Activated naive CD4-positive, alpha-beta T cell treated with anti-CD3 and anti-CD28 coated beads for 36 hours (primary cell): ENCODE measurements at regions of chr6 and their contacts with region 1.

Region 1: GRCh38 chr6:142692942-142693341 is 252.0 kb downstream of the HIVEP2 start:
- DNase-seq: peak; percentile 81
- H3K4me3 Mint-ChIP-seq: no peak overlapping the region
- H3K27ac Mint-ChIP-seq: peak overlapping the region; percentile 63
- H3K4me1 Mint-ChIP-seq: peaks cover 22% of the 10 kb centered on the region
- H3K27me3 Mint-ChIP-seq: no peaks in the 10 kb centered on the region

Region 2: GRCh38 chr6:142474531-142475289 is 218.2 kb before region 1 on chr6:
- CTCF ChIA-PET with region 1: interaction called, 23 read pairs
- intact Hi-C with region 1: loop called (anchors 2 kb)
- DNase-seq: peak; percentile 10
- H3K4me3 Mint-ChIP-seq: no peak overlapping the region
- H3K27ac Mint-ChIP-seq: no peak overlapping the region
- H3K4me1 Mint-ChIP-seq: peaks cover 11% of the 10 kb centered on the region
- H3K27me3 Mint-ChIP-seq: no peaks in the 10 kb centered on the region

Region 3: DNA sequence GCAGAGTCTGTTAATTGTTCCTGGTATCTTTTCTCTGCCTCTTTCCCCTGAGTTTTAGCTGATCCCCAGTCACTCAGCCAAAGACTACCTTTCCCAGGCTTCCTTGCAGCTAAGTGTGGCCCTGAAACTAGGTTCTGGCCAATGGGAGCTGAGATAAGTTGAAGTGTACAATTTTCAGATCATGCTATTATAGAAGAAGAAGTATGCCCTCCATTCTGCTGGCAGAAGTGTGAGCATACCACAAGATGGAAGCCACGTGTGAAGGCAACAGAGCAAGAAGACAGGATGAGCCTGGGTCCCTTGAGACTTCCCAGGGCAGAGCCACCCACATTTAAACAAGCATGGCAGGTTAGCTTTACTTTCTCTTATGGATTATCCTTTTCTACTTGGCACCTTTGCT is 21.2 kb before region 1 on chr6:
- CTCF ChIA-PET with region 1: no interaction called
- intact Hi-C with region 1: no loop called
- DNase-seq: no peak
- H3K4me3 Mint-ChIP-seq: no peak overlapping the region
- H3K27ac Mint-ChIP-seq: no peak overlapping the region
- H3K4me1 Mint-ChIP-seq: peaks cover 14% of the 10 kb centered on the region
- H3K27me3 Mint-ChIP-seq: no peaks in the 10 kb centered on the region

Region 4: GRCh38 chr6:142746524-142746923 is 53.6 kb after region 1 on chr6:
- CTCF ChIA-PET with region 1: interaction called, 11 read pairs
- intact Hi-C with region 1: no loop called
- DNase-seq: peak; percentile 31
- H3K4me3 Mint-ChIP-seq: no peak overlapping the region
- H3K27ac Mint-ChIP-seq: no peak overlapping the region
- H3K4me1 Mint-ChIP-seq: peaks cover 12% of the 10 kb centered on the region
- H3K27me3 Mint-ChIP-seq: no peaks in the 10 kb centered on the region

Region 5: DNA sequence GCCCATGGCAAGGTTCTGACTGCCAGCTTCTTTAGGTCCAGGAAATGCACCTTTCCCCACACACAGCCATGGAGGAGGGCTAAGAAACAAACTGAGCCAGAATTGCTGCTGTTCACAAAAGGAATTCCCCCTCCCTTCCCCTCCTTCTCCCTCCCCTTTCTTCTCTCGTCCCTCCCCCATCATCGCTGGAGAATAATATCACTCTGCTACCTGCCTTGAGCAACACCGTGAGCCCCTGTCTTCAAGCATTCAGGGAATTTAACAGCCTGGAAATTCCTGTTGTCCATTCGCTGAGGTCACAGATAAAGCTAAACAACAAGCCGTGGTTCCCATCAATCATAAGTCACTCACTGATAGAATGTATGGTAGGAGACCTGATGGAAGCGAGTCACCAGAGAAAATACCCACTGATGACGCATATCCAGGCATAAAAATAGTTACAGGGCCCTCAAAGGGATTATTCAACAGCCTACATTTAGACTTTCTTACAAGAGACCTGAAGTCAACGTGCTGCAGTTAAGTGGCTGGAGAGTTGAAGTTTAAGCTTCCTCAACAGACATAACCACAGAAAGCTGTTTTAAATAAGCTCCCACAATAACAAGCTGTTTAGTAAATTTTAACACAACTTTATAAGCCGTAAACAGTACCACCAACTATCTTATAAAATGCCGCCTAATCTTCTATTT is 192.4 kb after region 1 on chr6:
- CTCF ChIA-PET with region 1: interaction called, 6 read pairs
- intact Hi-C with region 1: loop called (anchors 1 kb)
- DNase-seq: peak; percentile 66
- H3K4me3 Mint-ChIP-seq: peak overlapping the region; percentile 90
- H3K27ac Mint-ChIP-seq: peak overlapping the region; percentile 99
- H3K4me1 Mint-ChIP-seq: peaks cover 87% of the 10 kb centered on the region
- H3K27me3 Mint-ChIP-seq: no peaks in the 10 kb centered on the region

Region 6: GRCh38 chr6:143026696-143027449 is 333.9 kb after region 1 on chr6:
- CTCF ChIA-PET with region 1: interaction called, 73 read pairs
- intact Hi-C with region 1: loop called (anchors 1 kb)
- DNase-seq: peak; percentile 76
- H3K4me3 Mint-ChIP-seq: no peak overlapping the region
- H3K27ac Mint-ChIP-seq: no peak overlapping the region
- H3K4me1 Mint-ChIP-seq: peaks cover 7% of the 10 kb centered on the region
- H3K27me3 Mint-ChIP-seq: no peaks in the 10 kb centered on the region

Region 7: GRCh38 chr6:143325379-143326140 is 632.6 kb after region 1 on chr6:
- CTCF ChIA-PET with region 1: no interaction called
- intact Hi-C with region 1: no loop called
- DNase-seq: no peak
- H3K4me3 Mint-ChIP-seq: no peak overlapping the region
- H3K27ac Mint-ChIP-seq: no peak overlapping the region
- H3K4me1 Mint-ChIP-seq: no peaks in the 10 kb centered on the region
- H3K27me3 Mint-ChIP-seq: no peaks in the 10 kb centered on the region

Region 8: DNA sequence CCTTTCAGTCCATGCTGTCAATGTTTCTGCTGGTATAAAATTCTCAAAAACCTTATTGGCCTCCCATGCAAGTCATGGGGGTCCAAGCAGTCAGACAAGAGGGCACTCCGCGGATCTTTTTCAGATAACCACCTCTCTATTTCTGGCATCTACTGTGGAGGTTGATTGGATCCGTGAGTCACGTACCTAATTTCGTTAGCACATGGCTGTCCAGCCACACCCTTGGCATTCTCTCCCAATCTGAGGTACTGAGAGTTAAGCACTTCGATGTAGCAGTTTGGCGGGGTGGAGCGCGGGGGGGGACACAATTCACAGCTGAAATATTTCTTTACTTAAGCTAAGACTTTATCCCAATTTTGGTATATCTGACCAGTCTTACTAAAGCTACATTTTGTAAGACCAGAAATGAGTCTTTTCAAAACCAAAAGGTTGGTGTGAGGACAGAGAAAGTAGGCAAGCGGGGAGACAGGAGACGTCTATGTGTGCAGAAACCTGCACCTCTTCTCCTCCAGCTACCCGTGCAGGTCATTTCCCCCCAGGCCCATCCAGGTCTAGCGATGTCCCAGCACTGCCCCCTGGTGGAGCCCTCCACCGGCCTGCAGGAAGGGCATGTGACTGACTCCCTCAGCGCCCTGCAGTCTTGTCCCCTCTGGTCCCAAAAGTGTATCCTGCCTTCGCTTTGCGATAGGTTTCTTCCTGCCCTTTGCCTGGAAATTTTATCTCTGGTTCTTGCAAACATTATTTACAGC is 644.4 kb after region 1 on chr6:
- CTCF ChIA-PET with region 1: interaction called, 7 read pairs
- intact Hi-C with region 1: loop called (anchors 5 kb)
- DNase-seq: peak; percentile 55
- H3K4me3 Mint-ChIP-seq: no peak overlapping the region
- H3K27ac Mint-ChIP-seq: no peak overlapping the region
- H3K4me1 Mint-ChIP-seq: peaks cover 4% of the 10 kb centered on the region
- H3K27me3 Mint-ChIP-seq: no peaks in the 10 kb centered on the region

Region 9: DNA sequence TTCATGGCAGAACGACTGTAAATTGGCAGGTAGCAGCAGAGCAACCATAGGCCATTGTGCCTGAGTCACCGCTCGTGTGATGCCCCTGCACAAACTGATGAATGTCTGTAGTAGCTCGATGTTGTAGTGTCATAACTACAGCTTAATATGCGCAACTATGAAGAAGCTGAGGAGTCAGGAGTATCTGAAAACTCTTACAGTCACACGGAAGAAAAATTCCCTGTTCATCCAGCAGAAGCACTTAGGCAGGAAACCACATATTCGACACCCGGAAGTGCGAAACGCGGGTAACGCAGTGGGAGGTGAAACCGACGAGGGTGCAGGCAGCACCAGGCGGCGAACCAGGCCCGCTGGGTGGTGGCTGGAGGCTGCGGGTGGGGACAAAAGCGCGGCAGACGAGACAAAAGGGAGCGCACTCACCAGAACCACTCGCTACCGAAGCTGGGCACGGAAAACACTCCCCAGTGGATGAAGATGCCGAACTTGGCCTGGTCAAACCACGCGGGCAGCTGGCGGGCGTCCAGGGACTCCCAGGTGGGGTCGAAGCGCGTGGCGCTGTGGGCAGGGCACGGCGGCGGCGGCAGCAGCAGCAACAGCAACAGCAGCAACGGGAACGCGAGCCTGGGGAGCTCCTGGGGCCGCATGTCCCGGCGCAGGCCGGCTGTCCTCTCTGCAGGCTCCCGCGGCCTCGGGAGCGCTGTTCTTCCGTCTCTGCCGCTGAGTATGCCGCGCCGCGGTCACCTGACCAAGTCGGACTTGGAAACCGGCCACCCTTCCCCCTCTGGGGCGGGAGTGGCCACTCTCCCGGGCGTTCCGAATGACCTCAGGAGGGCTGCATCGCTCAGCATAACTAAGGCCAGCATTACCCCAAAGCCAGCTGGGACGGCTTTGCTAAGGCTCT is 818.3 kb after region 1 on chr6 and contains the start of gene FUCA2:
- CTCF ChIA-PET with region 1: no interaction called
- intact Hi-C with region 1: loop called (anchors 5 kb)
- DNase-seq: peak; percentile 82
- H3K4me3 Mint-ChIP-seq: peak within 1 kb of the TSS; percentile 85
- H3K27ac Mint-ChIP-seq: peak within 1 kb of the TSS; percentile 85
- H3K4me1 Mint-ChIP-seq: peaks cover 15% of the 10 kb centered on the region
- H3K27me3 Mint-ChIP-seq: no peaks in the 10 kb centered on the region
- total RNA-seq, gene FUCA2: 7.7 to 8.2 TPM